Activated B cell treated with CpG ODN at 0.5 μM for 24 hours (primary cell): ENCODE measurements at regions of chr17 and their contacts with region 1.

Region 1: GRCh38 chr17:42322382-42323267 is 34.3 kb downstream of the STAT5A start:
- DNase-seq: peak; percentile 80
- ATAC-seq: peak; percentile 97
- H3K4me3 Mint-ChIP-seq: no peak overlapping the region
- H3K27ac Mint-ChIP-seq: peak overlapping the region; percentile 63
- H3K4me1 Mint-ChIP-seq: peaks cover 35% of the 10 kb centered on the region
- H3K27me3 Mint-ChIP-seq: no peaks in the 10 kb centered on the region
- CTCF ChIP-seq: peak; percentile 90

Region 2: GRCh38 chr17:42312285-42313130 is 10.1 kb before region 1 on chr17:
- CTCF ChIA-PET with region 1: interaction called, 25 read pairs
- POLR2A ChIA-PET with region 1: interaction called, 3 read pairs
- intact Hi-C with region 1: loop called (anchors 1 kb)
- DNase-seq: peak; percentile 70
- ATAC-seq: peak; percentile 77
- H3K4me3 Mint-ChIP-seq: peak overlapping the region; percentile 53
- H3K27ac Mint-ChIP-seq: peak overlapping the region; percentile 30
- H3K4me1 Mint-ChIP-seq: peaks cover 55% of the 10 kb centered on the region
- H3K27me3 Mint-ChIP-seq: no peaks in the 10 kb centered on the region
- CTCF ChIP-seq: no peak

Region 3: GRCh38 chr17:42517516-42517915 is 194.9 kb after region 1 on chr17:
- CTCF ChIA-PET with region 1: interaction called, 3 read pairs
- POLR2A ChIA-PET with region 1: no interaction called
- intact Hi-C with region 1: loop called (anchors 1 kb)
- DNase-seq: peak; percentile 75
- ATAC-seq: peak; percentile 92
- H3K4me3 Mint-ChIP-seq: no peak overlapping the region
- H3K27ac Mint-ChIP-seq: no peak overlapping the region
- H3K4me1 Mint-ChIP-seq: peaks cover 7% of the 10 kb centered on the region
- H3K27me3 Mint-ChIP-seq: no peaks in the 10 kb centered on the region
- CTCF ChIP-seq: peak; percentile 64

Region 4: DNA sequence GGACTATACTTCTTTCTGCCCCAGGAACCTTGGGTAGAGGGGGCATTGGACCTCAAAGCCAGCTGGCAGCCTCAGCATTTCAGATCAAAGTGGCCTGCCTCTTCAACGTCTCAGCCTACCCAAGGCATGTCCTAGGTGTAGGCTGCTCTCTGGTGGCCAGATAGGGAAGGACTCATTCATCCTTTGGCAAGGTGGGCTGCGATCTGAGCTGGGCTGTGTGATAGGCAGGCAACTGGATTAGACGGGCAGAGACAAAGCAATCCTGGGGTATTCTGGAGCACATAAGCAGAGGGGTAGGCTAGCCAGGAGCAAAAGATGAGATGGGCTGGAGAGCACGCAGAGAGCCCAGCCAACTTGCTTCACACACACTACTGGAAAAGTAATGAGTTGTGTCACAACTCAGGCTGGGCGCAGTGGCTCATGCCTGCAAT is 204.7 kb after region 1 on chr17:
- CTCF ChIA-PET with region 1: interaction called, 4 read pairs
- POLR2A ChIA-PET with region 1: no interaction called
- intact Hi-C with region 1: loop called (anchors 1 kb)
- DNase-seq: peak; percentile 42
- ATAC-seq: peak; percentile 76
- H3K4me3 Mint-ChIP-seq: no peak overlapping the region
- H3K27ac Mint-ChIP-seq: no peak overlapping the region
- H3K4me1 Mint-ChIP-seq: peaks cover 31% of the 10 kb centered on the region
- H3K27me3 Mint-ChIP-seq: no peaks in the 10 kb centered on the region
- CTCF ChIP-seq: peak; percentile 38